ENCODE measurements at regions of chr6 and their contacts with region 1.

Region 1: GRCh38 chr6:6724539-6725467 is 136.3 kb downstream of the LY86 start:
- DNase-seq: peak; percentile 72 to 82
- H3K4me3 ChIP-seq: peak overlapping the region; percentile 29 to 33
- H3K27ac ChIP-seq: peak overlapping the region; percentile 85 to 91
- H3K4me1 ChIP-seq: peaks cover 0 to 7% of the 10 kb centered on the region in 2 donors
- H3K27me3 ChIP-seq: no peaks in the 10 kb centered on the region
- CTCF ChIP-seq: peak; percentile 62 to 85 (median 74)
- POLR2A ChIP-seq: no peak

Region 2: DNA sequence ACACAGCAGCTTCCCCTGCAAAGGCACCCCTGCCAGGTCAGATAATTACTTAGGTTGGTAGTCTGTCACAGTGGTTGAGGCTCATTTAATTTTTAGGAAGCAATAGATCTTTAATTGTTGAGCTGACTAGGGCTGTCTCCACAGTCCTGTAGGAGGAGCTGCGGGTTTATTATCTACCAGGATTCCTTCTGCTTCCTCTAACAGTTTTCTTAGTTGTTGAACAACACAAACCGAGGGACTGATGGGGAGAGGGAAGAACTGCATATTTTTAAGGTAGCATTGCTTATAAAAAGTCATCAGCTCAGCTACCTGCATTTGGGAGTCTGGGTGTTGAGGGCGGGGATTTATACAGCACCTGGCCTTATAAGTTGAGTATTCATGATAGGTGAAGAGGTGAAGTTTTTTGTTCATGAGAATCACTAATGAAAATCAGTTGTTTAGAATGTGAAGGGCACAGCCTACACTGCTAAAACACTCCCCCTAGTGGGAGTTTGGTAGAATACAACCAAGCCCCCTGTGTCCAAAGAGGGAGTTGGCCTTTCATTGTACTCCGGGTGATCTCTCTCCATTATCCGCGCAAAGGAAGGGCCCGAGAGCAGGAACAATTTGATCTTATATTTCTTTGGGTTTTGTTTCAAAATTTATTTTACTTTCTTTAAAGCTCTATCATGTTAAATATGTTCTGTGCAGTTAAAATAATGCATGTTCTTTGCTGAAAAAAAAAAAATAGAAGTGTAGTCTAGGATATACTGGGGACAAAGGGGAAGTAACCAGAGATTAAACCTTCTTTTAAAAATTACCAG is 518.6 kb after region 1 on chr6:
- intact Hi-C with region 1: loop called (anchors 10 kb)
- DNase-seq: peak in 1 of 2 donors; percentile 56
- H3K4me3 ChIP-seq: no peak overlapping the region
- H3K27ac ChIP-seq: peak overlapping the region; percentile 26 to 33
- H3K4me1 ChIP-seq: no peaks in the 10 kb centered on the region
- H3K27me3 ChIP-seq: no peaks in the 10 kb centered on the region
- CTCF ChIP-seq: peak; percentile 85 to 87 (median 86)
- POLR2A ChIP-seq: no peak